WTC11 (cell line): ENCODE measurements at regions of chr14 and their contacts with region 1.

Region 1: GRCh38 chr14:93103392-93104080 is 12.2 kb downstream of the ITPK1 start:
- DNase-seq: no peak
- ATAC-seq: no peak
- H3K4me3 Mint-ChIP-seq: no peak overlapping the region
- H3K27ac Mint-ChIP-seq: no peak overlapping the region
- H3K4me1 Mint-ChIP-seq: peaks cover 58% of the 10 kb centered on the region
- H3K27me3 Mint-ChIP-seq: no peaks in the 10 kb centered on the region
- CTCF ChIP-seq: no peak

Region 2: GRCh38 chr14:93033983-93034670 is 69.4 kb before region 1 on chr14:
- CTCF ChIA-PET with region 1: interaction called, 10 read pairs
- POLR2A ChIA-PET with region 1: no interaction called
- DNase-seq: peak; percentile 66
- ATAC-seq: peak; percentile 68
- H3K4me3 Mint-ChIP-seq: no peak overlapping the region
- H3K27ac Mint-ChIP-seq: peak overlapping the region; percentile 8; the same call in 1 of the 2 replicates
- H3K4me1 Mint-ChIP-seq: peaks cover 66% of the 10 kb centered on the region
- H3K27me3 Mint-ChIP-seq: no peaks in the 10 kb centered on the region
- CTCF ChIP-seq: peak; percentile 11; the same call in 1 of the 2 replicates

Region 3: GRCh38 chr14:93040443-93040842 is 63.1 kb before region 1 on chr14:
- CTCF ChIA-PET with region 1: interaction called, 11 read pairs
- POLR2A ChIA-PET with region 1: no interaction called
- DNase-seq: no peak
- ATAC-seq: 0 out of 2 replicates have a peak, but pooled peaks have one; percentile 1
- H3K4me3 Mint-ChIP-seq: no peak overlapping the region
- H3K27ac Mint-ChIP-seq: peak overlapping the region; percentile 73; the same call in 1 of the 2 replicates
- H3K4me1 Mint-ChIP-seq: peaks cover 87% of the 10 kb centered on the region
- H3K27me3 Mint-ChIP-seq: no peaks in the 10 kb centered on the region
- CTCF ChIP-seq: no peak

Region 4: DNA sequence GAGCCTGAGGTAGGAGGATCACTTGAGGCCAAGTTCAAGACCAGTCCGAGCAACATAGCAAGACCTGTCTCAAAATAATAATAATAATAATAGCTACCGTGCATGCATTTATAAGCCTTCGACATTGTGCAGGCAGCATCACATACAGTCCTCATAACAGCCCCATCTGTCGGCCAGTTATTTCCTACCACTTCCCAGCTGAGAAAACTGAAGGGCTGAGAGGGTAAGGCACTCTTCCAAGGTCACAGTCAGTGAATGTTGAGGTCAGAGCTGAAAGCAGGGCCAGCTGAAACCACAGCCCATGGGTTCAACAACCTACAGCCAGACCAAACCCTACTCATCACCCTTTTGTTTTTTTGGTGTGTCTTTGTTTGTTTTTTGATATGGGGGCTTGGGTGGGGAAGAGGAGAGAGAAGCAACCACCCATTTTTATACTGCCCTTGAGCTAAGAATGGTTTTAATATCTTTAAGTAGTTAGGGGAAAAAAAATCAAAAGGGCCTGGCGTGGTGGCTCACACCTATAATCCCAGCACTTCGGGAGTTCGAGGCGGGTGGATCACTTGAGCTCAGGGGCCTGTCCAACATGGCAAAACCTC is 29.0 kb after region 1 on chr14:
- CTCF ChIA-PET with region 1: interaction called, 12 read pairs
- POLR2A ChIA-PET with region 1: interaction called, 3 read pairs
- DNase-seq: no peak
- ATAC-seq: peak; percentile 91
- H3K4me3 Mint-ChIP-seq: no peak overlapping the region
- H3K27ac Mint-ChIP-seq: peak overlapping the region; percentile 93
- H3K4me1 Mint-ChIP-seq: peaks cover 2% of the 10 kb centered on the region; the same call in 1 of the 2 replicates
- H3K27me3 Mint-ChIP-seq: no peaks in the 10 kb centered on the region
- CTCF ChIP-seq: no peak